GM12878 (cell line): ENCODE measurements at regions of chr14 and their contacts with region 1.

Region 1: DNA sequence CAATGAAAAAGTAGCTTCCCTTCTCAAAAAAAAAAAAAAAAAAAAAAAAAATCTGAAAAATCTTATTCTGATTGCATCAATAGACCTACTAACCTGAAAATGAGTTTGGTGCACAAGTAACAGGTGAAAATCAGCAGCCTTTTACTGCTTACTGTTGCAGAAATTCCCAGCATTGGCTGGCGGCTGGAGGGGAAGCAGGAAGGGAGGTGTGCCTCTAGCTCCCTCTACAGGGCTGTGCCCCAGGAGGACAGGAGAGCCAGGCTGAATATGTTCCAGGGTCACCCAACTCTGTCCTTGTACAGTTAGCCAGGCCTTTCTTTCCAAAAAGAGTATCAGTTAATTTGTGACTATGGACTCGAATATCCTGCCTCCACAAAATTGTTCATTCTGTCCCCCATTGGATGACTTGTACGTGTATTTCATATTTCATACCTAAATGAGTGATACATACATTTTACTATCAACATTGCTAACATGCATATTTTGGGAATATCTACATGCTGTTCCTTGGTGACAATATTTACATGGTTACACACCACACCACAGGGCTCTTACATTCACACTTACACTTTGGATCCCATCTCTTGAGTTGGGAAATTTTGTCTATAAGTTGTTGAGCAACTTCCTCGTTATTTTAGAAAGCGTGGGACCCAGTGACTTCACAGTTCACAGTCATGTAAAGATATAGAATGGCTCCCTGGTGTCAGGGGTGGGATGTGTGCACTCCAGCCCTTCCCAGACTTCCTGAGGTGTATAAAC is 124.8 kb downstream of the SAMD4A start:
- DNase-seq: no peak
- ATAC-seq: peak; percentile 91
- H3K4me3 ChIP-seq: no peak overlapping the region
- H3K27ac ChIP-seq: no peak overlapping the region
- H3K4me1 ChIP-seq: no peaks in the 10 kb centered on the region
- H3K27me3 ChIP-seq: no peaks in the 10 kb centered on the region
- CTCF ChIP-seq: peak; percentile 71 to 89 (median 78)
- EP300 ChIP-seq: no peak
- POLR2A ChIP-seq: no peak
- RAD21 ChIP-seq: peak; percentile 76

Region 2: GRCh38 chr14:54665946-54666345 is 25.8 kb before region 1 on chr14:
- CTCF ChIA-PET with region 1: interaction called, 10 read pairs
- POLR2A ChIA-PET with region 1: no interaction called
- RAD21 ChIA-PET with region 1: interaction called, 3 read pairs
- SMC1A ChIA-PET with region 1: interaction called, 4 read pairs
- in situ Hi-C with region 1: no loop called
- intact Hi-C with region 1: no loop called
- DNase-seq: peak; percentile 9
- ATAC-seq: peak; percentile 66
- H3K4me3 ChIP-seq: no peak overlapping the region
- H3K27ac ChIP-seq: no peak overlapping the region
- H3K4me1 ChIP-seq: no peaks in the 10 kb centered on the region
- H3K27me3 ChIP-seq: no peaks in the 10 kb centered on the region
- CTCF ChIP-seq: no peak
- EP300 ChIP-seq: no peak
- POLR2A ChIP-seq: no peak
- RAD21 ChIP-seq: no peak

Region 3: GRCh38 chr14:54792288-54792687 is 100.6 kb after region 1 on chr14:
- CTCF ChIA-PET with region 1: no interaction called
- POLR2A ChIA-PET with region 1: no interaction called
- RAD21 ChIA-PET with region 1: no interaction called
- SMC1A ChIA-PET with region 1: no interaction called
- in situ Hi-C with region 1: no loop called
- intact Hi-C with region 1: no loop called
- DNase-seq: no peak
- ATAC-seq: no peak
- H3K4me3 ChIP-seq: no peak overlapping the region
- H3K27ac ChIP-seq: no peak overlapping the region
- H3K4me1 ChIP-seq: no peaks in the 10 kb centered on the region
- H3K27me3 ChIP-seq: peaks cover 0 to 3% of the 10 kb centered on the region in 2 experiments; a peak in 1 of 4 replicates
- CTCF ChIP-seq: no peak
- EP300 ChIP-seq: no peak
- POLR2A ChIP-seq: no peak
- RAD21 ChIP-seq: no peak